Activated CD4-positive, alpha-beta T cell treated with anti-CD3 and anti-CD28 coated beads, Interleukin-2, amount 10 ng/mL, durations not matched to agents 24 days and 14 days (primary cell): ENCODE measurements at regions of chr3 and their contacts with region 1.

Region 1: DNA sequence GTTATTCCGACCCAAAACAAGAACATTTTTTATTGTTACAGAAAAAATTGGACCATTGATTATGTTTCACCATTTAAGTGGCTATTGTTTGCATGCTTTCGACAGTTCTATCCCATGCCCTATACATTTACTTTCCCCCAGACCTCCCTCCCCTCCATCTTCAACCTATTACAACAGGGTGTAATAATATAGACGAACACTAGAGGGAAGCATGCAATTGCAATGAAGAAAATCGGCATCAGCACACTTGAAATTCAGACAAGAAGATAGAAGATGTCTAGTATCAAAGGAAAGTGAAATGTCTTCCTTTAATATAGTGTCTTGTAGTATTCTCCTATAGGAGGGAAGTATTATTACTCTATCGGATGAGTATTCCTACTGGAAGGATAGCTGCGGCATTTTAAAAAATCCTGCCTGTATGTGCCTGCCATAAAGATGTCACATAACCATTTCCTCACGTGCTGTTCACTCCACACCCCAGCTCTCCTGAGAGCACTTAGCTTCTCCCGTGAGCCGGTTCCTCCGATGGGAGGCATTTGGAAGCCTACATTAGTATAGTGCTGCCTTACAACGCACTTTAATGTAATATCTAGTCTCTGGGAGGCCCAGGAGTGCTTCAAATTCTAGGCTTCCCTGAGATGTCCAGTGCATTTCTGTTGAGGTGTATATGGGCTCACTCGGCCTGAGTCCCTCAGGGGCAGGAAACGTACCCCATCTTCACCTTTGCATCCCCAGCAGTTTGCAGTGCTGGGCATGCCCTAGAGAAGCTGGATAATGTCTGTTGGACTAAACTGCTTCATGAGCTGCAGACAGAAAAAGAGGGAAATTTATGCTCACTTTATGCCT is 17.8 kb upstream of the ERICH6 start:
- DNase-seq: peak; percentile 79
- H3K4me3 Mint-ChIP-seq: no peak overlapping the region
- H3K27ac Mint-ChIP-seq: no peak overlapping the region
- H3K4me1 Mint-ChIP-seq: peaks cover 20% of the 10 kb centered on the region
- H3K27me3 Mint-ChIP-seq: no peaks in the 10 kb centered on the region

Region 2: GRCh38 chr3:150703299-150704134 is 18.0 kb before region 1 on chr3 and contains the start of gene ERICH6:
- intact Hi-C with region 1: loop called (anchors 1 kb)
- DNase-seq: peak; percentile 95
- H3K4me3 Mint-ChIP-seq: peak within 1 kb of the TSS; percentile 92
- H3K27ac Mint-ChIP-seq: peak within 1 kb of the TSS; percentile 99
- H3K4me1 Mint-ChIP-seq: peaks cover 28% of the 10 kb centered on the region
- H3K27me3 Mint-ChIP-seq: peaks cover 10% of the 10 kb centered on the region
- total RNA-seq, gene ERICH6: not detected in 2 replicates

Region 3: DNA sequence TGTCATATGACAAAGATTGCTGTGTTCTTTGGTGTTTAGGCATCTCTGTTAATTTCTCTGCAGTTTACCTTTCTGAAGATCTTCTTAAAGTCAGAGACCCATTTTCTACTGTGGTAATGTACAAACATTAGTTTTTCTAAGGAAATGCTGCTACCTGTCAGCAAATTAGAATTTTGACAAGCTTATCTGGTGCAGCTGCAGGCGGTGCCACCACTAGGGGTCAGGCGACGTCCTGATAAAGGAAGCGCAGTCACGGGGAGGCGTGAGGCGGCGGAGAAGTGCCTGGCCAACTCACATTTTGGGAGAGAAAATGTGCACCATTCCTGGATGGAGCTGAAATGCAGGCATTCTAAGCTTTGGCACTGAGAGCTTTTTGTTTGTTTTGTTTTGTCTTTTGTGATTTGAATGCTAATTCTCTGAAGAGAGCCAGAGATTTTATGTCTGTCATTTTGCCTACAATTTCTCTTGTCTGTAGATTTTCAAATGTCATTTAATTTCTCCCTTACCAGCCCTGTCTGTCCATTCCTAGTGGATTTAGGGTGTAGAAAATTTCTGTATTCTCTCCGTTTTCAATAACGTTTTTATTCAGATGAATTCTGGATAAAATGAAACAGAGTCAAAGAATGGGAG is 66.3 kb after region 1 on chr3:
- intact Hi-C with region 1: loop called (anchors 1 kb)
- DNase-seq: peak; percentile 92
- H3K4me3 Mint-ChIP-seq: peak overlapping the region; percentile 2
- H3K27ac Mint-ChIP-seq: peak overlapping the region; percentile 39
- H3K4me1 Mint-ChIP-seq: peaks cover 39% of the 10 kb centered on the region
- H3K27me3 Mint-ChIP-seq: peaks cover 4% of the 10 kb centered on the region

Region 4: DNA sequence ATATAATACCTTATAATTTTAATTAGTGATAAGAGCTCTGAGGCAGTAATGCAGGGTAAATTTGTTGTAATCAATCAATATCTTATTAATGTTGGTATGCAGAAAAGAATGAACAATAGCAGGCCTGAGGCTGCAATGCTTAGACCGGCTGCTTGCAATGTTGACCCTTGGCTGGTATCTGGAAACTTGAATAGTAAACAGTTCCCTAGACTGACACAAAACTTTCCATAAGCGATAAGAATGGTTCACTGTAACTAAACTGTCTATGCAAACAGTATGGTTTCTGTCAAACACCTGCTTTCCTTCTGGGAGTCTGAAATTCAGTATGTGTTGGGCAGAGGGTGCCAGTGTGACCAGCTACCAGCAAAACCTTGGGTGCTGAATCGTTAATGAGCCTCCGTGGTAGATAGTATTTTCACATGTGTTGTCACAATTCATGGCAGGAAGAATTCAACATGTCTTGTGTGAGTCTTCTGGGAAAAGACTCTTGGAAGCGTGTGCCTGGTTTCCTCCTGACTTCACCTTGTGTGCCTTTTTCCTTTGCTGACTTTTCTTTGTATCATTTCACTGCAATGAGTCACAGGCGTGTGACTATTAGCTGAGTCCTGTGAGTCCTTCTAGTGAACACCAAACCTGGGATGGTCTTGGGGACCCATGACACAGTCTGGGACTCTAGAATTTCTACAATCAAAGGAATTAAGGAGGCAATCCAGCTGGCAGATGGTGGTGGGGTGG is 281.7 kb after region 1 on chr3:
- intact Hi-C with region 1: no loop called
- DNase-seq: no peak
- H3K4me3 Mint-ChIP-seq: no peak overlapping the region
- H3K27ac Mint-ChIP-seq: no peak overlapping the region
- H3K4me1 Mint-ChIP-seq: no peaks in the 10 kb centered on the region
- H3K27me3 Mint-ChIP-seq: peaks cover 17% of the 10 kb centered on the region